IMR-90 (cell line): ENCODE measurements at regions of chr7 and their contacts with region 1.

Region 1: GRCh38 chr7:151626422-151627115 is 106.9 kb upstream of the RHEB start:
- DNase-seq: no peak
- ATAC-seq: no peak
- H3K4me3 ChIP-seq: no peak overlapping the region
- H3K27ac ChIP-seq: no peak overlapping the region
- H3K4me1 ChIP-seq: no peaks in the 10 kb centered on the region; the same call in 1 of the 2 replicates
- H3K27me3 ChIP-seq: no peaks in the 10 kb centered on the region
- CTCF ChIP-seq: peak; percentile 29; the same call in 1 of the 2 replicates
- POLR2A ChIP-seq: no peak
- RAD21 ChIP-seq: peak; percentile 46

Region 2: DNA sequence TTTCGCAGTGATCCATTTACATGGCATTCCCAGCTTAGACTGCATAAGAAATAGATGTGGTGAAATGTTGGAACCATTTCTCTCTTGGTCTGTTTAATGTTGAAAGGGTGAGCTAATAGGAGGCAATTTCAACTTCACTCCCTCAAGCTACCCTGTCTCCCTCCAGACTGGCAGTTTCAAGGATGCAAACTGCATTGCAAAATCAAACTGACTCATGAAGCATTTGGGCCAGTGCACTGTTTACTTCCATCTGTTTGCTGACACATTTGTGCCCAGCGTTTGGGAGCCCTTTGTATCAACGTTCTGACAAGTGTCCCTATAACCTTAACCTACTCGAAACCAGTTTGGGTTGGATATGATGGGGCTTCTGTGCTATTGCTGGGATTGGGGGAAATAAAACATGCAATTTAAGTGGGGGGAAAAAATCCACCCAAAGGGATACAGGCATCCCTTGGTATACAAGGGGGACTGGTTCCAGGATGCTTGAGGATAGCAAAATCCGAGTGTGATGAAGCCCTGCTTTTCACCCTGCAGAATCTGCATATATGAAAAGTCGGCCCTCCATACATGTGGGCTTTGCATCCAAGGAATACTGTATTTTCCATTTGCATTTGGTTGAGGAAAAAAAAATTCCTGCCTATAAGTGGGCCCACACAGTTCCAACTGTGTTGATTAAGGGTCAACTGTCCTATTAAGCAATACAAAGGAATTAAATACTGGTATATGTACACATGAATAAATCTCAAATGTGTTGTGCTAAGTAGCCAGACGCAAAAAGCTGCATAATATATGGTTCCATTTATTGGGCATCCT is 122.5 kb before region 1 on chr7:
- CTCF ChIA-PET with region 1: no interaction called
- POLR2A ChIA-PET with region 1: no interaction called
- dilution Hi-C with region 1: no loop called
- in situ Hi-C with region 1: no loop called
- intact Hi-C with region 1: loop called (anchors 5 kb)
- DNase-seq: peak; percentile 91
- ATAC-seq: peak; percentile 91
- H3K4me3 ChIP-seq: no peak overlapping the region
- H3K27ac ChIP-seq: peak overlapping the region; percentile 23; the same call in 1 of the 2 replicates
- H3K4me1 ChIP-seq: peaks cover 18% of the 10 kb centered on the region
- H3K27me3 ChIP-seq: no peaks in the 10 kb centered on the region
- CTCF ChIP-seq: no peak
- POLR2A ChIP-seq: no peak
- RAD21 ChIP-seq: no peak; the same call in 1 of the 2 replicates

Region 3: DNA sequence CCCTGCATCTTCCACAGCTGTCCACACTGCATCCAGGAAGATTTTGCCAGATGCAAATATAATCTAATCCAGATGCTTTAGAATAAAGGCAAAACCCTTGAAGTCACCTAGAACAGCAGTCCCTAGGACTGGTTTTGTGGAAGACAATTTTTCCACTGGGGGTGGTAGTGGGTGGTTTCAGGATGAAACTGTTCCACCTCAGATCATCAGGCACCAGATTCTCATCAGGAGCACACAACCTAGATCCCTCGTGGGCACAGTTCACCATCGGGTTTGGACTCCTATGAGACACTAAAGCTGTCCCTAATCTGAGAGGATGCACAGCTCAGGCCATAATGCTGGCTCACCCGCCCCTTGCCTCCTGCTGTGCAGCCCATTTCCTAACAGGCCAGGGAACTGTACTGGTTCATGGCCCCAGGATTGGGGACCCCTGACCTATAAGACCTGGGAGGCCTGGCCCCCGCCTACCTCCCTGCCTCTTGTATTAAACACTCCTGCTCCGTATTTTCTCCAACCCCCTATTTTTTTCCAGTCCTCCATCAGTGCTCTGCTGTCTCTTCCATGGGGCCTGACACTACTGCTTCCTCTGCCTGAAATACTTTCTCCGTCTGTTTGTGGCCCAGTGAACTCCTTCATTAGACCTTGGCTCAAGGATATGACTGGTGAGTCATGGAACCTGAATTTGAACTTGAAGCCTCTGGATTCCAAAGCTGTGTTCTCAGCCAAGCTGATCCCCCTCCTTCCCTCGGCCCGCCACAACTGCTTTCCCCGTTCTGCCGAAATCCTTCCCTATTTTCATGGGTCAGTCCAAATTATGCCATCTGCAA is 27.0 kb before region 1 on chr7:
- CTCF ChIA-PET with region 1: interaction called, 3 read pairs
- POLR2A ChIA-PET with region 1: no interaction called
- dilution Hi-C with region 1: no loop called
- in situ Hi-C with region 1: no loop called
- intact Hi-C with region 1: loop called (anchors 2 kb)
- DNase-seq: peak; percentile 93
- ATAC-seq: peak; percentile 84
- H3K4me3 ChIP-seq: no peak overlapping the region
- H3K27ac ChIP-seq: peak overlapping the region; percentile 81
- H3K4me1 ChIP-seq: peaks cover 23% of the 10 kb centered on the region
- H3K27me3 ChIP-seq: no peaks in the 10 kb centered on the region
- CTCF ChIP-seq: no peak
- POLR2A ChIP-seq: no peak
- RAD21 ChIP-seq: peak; percentile 3; the same call in 1 of the 2 replicates

Region 4: GRCh38 chr7:151744656-151745638 is 118.4 kb after region 1 on chr7:
- CTCF ChIA-PET with region 1: no interaction called
- POLR2A ChIA-PET with region 1: no interaction called
- dilution Hi-C with region 1: no loop called
- in situ Hi-C with region 1: loop called (anchors 10 kb)
- intact Hi-C with region 1: no loop called
- DNase-seq: peak; percentile 89
- ATAC-seq: peak; percentile 66
- H3K4me3 ChIP-seq: no peak overlapping the region
- H3K27ac ChIP-seq: no peak overlapping the region
- H3K4me1 ChIP-seq: peaks cover 37% of the 10 kb centered on the region
- H3K27me3 ChIP-seq: no peaks in the 10 kb centered on the region
- CTCF ChIP-seq: peak; percentile 48
- POLR2A ChIP-seq: no peak
- RAD21 ChIP-seq: peak; percentile 53

Region 5: DNA sequence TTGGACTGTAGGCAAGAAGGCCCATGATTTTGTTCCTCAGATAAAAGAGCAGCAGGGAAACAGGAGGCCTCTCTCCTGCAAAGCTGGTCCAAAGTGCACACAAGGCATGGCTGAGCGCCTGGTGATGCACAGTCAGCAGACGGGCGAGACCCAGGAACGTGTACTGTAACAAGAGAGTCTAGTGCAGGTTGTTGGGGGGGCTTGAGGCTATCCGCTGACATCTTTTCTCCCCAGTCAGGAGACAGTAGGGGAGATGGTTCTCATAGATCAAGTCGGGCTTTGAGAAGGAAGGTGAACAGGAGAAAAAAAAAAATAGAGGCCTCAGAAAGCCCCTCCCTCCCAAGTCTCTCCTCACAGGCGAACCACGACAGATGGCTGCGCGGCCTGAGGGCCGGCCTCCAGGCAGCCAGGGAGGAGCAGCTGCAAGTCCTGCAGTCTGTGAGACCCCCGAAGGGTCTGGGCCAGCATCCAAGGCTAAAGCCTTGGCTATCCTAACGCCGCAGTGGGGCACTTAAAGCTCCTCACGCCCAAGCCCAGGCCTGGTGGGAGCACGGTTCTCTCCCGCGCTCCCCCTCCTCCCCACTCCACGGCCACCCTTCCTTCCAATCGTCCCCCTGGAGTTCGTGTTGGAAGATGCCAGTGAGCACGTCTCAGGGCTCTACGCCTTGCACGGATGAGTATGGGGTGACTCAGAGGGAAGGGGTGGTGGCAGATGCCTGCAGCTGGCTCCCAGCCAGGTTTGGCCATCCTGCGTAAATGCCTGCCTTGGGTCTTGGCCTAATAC is 182.0 kb after region 1 on chr7:
- CTCF ChIA-PET with region 1: no interaction called
- POLR2A ChIA-PET with region 1: no interaction called
- dilution Hi-C with region 1: no loop called
- in situ Hi-C with region 1: no loop called
- intact Hi-C with region 1: no loop called
- DNase-seq: no peak
- ATAC-seq: no peak
- H3K4me3 ChIP-seq: no peak overlapping the region
- H3K27ac ChIP-seq: no peak overlapping the region
- H3K4me1 ChIP-seq: no peaks in the 10 kb centered on the region
- H3K27me3 ChIP-seq: peaks cover 58% of the 10 kb centered on the region
- CTCF ChIP-seq: no peak
- POLR2A ChIP-seq: no peak
- RAD21 ChIP-seq: no peak